Cardiac septum (tissue), 1 donor: ENCODE measurements at regions of chr10 and their contacts with region 1.

Region 1: DNA sequence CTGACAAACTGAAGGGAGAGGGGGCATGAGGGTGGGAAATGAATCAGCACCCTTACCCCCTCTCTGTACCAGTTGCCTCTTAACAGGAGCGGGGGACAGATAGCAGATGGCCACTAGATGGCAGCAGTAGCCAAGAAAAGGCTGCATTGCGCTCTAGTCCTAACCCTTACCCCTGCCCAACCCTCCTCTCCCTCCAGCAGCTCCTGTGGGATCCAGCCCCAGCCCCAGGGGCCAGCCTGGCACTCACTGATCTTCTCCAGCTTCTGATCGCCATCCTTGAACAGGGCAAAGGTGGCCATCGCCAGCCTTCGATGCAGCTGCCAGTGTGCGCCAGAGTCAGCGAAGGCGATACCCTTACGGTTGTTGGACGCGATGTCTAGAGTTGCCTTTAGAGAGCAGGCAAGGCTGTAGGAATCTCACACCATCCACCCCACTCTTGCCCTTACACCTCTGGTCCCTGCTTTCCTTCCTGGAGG is 2.2 kb downstream of the CYP17A1 start:
- DNase-seq: peak; percentile 86

Region 2: DNA sequence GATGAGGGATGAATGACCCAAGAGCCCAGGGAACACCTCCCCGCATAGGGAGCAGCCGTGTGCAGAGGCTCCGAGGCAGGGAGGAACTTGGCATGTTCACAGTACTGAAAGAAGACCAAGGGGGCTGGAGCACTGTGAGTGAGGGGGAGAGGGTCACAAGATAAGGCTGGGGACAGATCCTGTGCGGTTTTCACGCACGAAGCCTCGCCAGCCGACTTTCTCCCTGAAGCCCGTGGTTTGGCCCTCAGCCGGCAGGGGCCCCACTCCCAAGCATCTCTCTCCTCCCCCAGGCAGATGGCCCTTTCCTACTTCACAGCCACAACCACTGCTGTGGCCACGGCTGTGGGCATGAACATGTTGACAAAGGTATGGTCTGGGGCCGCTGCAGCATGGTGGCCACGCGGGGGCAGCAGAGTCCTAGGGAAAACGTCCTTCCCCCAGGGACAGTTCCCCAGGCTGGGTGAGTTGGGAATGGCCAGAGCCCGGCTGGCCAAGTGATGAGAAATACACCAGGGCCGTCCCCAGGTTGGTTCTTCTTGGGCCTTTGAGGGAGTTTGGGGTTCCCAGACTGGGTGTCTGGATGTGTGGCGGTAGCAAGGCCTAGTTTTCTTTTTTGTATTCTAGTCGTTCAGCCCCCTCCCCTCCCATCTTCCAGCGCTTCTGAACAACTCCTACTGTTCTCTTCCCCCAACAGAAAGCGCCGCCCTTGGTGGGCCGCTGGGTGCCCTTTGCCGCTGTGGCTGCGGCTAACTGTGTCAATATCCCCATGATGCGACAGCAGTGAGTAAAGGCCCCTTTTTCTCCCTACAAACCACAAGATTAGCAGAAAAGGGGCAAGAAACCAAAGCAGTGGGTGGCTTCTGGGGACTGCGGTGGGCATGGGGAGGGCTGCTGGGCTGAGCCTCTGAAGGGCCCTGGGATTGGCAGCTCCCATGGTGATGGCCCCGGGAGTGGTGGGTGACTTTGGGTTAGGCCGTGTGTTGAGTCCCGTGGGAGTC is 105.7 kb before region 1 on chr10:
- intact Hi-C with region 1: loop called (anchors 5 kb)
- DNase-seq: peak; percentile 95

Region 3: DNA sequence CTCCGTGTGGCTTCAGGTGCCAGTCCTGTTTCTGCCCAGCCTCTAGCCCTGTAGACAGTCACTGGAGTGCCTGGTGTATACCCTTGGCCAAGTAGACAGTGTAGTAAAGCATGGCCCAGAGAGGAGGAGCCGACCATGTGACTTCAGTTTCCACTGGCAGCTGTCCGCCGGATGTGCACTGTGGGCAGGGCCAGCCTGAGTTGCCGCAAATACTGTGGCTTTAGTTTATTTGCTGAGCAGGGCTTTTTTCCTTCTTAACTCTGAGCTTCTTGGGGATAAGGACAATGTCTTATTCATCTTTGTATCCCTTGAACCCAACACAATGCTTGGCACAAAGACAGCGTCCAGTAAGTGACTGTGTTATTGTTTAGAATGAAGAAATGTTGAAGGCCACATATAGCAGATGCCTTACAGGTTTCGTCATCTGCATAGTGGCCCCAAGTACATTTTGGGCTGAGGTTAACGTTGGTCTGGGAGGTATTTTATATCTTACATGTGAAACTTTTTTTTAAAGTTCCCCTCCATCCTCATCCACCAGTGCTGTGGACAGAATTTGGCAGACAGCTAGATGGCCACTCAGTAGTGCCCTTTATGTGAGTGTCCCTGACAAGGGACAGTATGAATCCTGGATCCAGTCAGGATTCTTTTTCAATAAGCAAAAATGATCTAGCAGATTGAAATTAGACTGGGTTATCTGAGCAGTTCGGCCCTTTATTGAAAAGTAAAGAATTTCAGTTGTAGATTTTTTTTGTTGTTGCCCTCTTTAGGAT is 38.5 kb before region 1 on chr10:
- intact Hi-C with region 1: no loop called
- DNase-seq: peak; percentile 96

Region 4: DNA sequence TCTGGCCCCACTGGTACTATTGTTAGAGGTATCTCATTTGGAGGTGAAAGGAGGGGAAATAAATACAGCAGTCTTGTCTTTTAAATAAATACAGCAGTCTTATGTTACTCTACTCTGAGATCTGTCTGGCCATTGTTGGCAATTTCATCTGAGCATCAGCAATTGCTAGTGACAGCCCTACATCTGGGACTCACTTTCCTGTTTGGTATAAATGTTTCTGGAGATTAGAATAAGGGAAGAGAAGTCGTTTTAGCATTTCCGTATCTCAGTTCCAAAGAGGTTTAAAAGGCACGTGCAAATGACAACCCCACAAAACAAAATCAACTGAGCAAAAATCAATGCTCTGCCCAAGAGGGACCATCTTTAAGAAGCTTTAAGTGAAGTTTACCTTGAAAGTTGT is 65.0 kb after region 1 on chr10:
- intact Hi-C with region 1: loop called (anchors 2 kb)
- DNase-seq: no peak